ENCODE measurements at regions of chr2 and their contacts with region 1.

Region 1: GRCh38 chr2:33583194-33583938 is 15.7 kb downstream of the FAM98A start:
- DNase-seq: peak; percentile 57
- H3K4me3 ChIP-seq: no peak overlapping the region
- H3K27ac ChIP-seq: peak overlapping the region in 1 of 2 experiments; percentile 39; a peak in 1 of 4 replicates
- H3K4me1 ChIP-seq: no peaks in the 10 kb centered on the region; a peak in 1 of 4 replicates
- H3K27me3 ChIP-seq: no peaks in the 10 kb centered on the region
- CTCF ChIP-seq: peak; percentile 99
- EP300 ChIP-seq: no peak
- RAD21 ChIP-seq: peak; percentile 89

Region 2: GRCh38 chr2:33412920-33413319 is 170.4 kb before region 1 on chr2:
- CTCF ChIA-PET with region 1: interaction called, 10 read pairs
- POLR2A ChIA-PET with region 1: no interaction called
- DNase-seq: peak; percentile 18
- H3K4me3 ChIP-seq: no peak overlapping the region
- H3K27ac ChIP-seq: peak overlapping the region in 1 of 2 experiments; percentile 75; a peak in 2 of 4 replicates
- H3K4me1 ChIP-seq: peaks cover 0 to 6% of the 10 kb centered on the region in 2 experiments; a peak in 1 of 4 replicates
- H3K27me3 ChIP-seq: no peaks in the 10 kb centered on the region
- CTCF ChIP-seq: peak; percentile 79
- EP300 ChIP-seq: no peak
- RAD21 ChIP-seq: peak; percentile 60

Region 3: GRCh38 chr2:33570681-33571080 is 12.7 kb before region 1 on chr2:
- CTCF ChIA-PET with region 1: interaction called, 36 read pairs
- POLR2A ChIA-PET with region 1: no interaction called
- DNase-seq: no peak
- H3K4me3 ChIP-seq: no peak overlapping the region
- H3K27ac ChIP-seq: no peak overlapping the region
- H3K4me1 ChIP-seq: no peaks in the 10 kb centered on the region
- H3K27me3 ChIP-seq: no peaks in the 10 kb centered on the region
- CTCF ChIP-seq: no peak
- EP300 ChIP-seq: no peak
- RAD21 ChIP-seq: no peak

Region 4: GRCh38 chr2:33599175-33599942 is 16.0 kb after region 1 on chr2 and contains the start of gene FAM98A:
- CTCF ChIA-PET with region 1: interaction called, 42 read pairs
- POLR2A ChIA-PET with region 1: no interaction called
- DNase-seq: peak; percentile 98
- H3K4me3 ChIP-seq: peak within 1 kb of the TSS; percentile 92 to 95
- H3K27ac ChIP-seq: peak within 1 kb of the TSS; percentile 72 to 79
- H3K4me1 ChIP-seq: peaks cover 0 to 15% of the 10 kb centered on the region in 2 experiments; a peak in 2 of 4 replicates
- H3K27me3 ChIP-seq: no peaks in the 10 kb centered on the region
- CTCF ChIP-seq: peak; percentile 24; the same call in 1 of the 2 replicates
- EP300 ChIP-seq: no peak
- RAD21 ChIP-seq: no peak
- polyA plus RNA-seq, gene FAM98A: 62.5 and 231 TPM in 2 replicates

Region 5: GRCh38 chr2:33859811-33860461 is 276.6 kb after region 1 on chr2:
- CTCF ChIA-PET with region 1: no interaction called
- POLR2A ChIA-PET with region 1: no interaction called
- DNase-seq: no peak
- H3K4me3 ChIP-seq: no peak overlapping the region
- H3K27ac ChIP-seq: no peak overlapping the region
- H3K4me1 ChIP-seq: no peaks in the 10 kb centered on the region
- H3K27me3 ChIP-seq: no peaks in the 10 kb centered on the region
- CTCF ChIP-seq: no peak
- EP300 ChIP-seq: no peak
- RAD21 ChIP-seq: no peak

Measured in SK-N-SH (cell line).